IMR-90 (cell line): ENCODE measurements at regions of chrX and their contacts with region 1.

Region 1: DNA sequence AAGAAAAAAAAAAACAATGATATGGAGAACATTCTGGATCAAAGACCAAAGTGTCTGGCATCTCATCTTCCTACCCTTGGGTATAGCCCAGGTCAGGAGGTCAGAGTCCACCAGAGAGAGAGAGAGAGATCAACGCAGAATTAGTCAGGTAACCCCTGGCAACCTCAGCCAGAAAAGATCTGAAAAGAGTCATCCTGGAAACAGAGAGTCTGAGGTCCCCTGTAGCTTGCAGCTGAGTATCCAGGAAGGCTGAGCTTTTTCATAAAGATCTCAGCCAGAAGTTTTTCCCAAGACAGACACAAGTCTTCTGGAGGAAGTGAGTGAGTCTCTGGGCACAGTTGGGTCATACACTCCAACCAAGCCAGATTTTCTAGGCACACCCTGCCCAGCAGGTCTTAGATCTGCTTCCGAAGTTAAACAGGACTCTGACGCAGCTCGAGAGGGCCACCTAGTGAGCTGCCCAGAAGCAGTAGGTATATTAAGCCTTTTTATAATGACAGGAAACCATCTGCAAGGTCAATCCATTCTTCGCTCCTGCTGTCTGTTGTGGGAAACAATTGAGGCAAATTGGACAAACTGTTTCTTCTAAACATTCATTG is 35.7 kb downstream of the ACE2 start:
- DNase-seq: peak; percentile 44
- ATAC-seq: peak; percentile 83
- H3K4me3 ChIP-seq: no peak overlapping the region
- H3K27ac ChIP-seq: no peak overlapping the region
- H3K4me1 ChIP-seq: no peaks in the 10 kb centered on the region
- H3K27me3 ChIP-seq: peaks cover 19% of the 10 kb centered on the region
- CTCF ChIP-seq: peak; percentile 62
- POLR2A ChIP-seq: no peak
- RAD21 ChIP-seq: peak; percentile 66

Region 2: DNA sequence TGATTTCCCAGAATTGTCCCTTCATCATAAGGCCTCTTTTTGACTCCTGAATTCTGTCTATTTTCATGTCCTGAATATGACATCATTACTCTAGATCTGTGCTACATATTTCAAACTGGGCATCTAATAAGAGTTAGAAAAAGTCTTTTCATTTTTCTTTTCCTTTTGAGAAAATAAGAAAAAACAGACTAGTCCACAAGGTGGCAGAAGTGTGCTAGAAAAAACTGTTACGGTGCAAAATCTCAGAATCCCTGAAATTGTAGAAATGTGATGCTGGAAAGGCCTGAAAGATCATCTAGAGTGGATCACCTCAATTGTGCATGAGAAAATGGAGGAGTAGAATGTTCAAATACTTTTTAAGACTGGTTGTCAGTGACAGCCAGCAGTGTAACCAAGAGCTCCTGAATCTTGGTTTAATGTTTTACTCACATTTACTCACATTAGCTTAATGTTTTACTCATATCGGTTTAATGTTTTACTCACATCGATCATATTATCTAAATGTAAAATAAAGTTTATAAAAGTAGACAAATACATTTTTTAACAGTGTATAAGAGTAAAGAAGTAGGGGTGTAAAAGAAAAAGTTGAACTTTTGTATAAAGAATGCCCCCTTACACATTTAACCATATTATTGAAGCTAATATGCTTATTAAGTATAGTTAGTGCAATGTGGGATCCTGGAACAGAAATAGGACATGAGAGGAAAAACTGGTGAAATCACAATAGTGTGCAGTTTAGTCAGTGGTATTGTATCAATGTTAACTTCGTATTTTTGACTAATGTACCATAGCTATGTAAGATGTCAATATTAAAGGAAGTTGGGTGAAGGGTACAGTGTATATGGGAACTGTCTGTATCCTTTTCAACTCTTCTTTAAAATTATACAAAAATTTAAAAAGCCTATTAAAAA is 264.9 kb before region 1 on chrX:
- CTCF ChIA-PET with region 1: no interaction called
- POLR2A ChIA-PET with region 1: no interaction called
- dilution Hi-C with region 1: no loop called
- in situ Hi-C with region 1: no loop called
- intact Hi-C with region 1: loop called (anchors 1 kb)
- DNase-seq: peak; percentile 30
- ATAC-seq: peak; percentile 29; the same call in 1 of the 2 replicates
- H3K4me3 ChIP-seq: no peak overlapping the region
- H3K27ac ChIP-seq: no peak overlapping the region
- H3K4me1 ChIP-seq: no peaks in the 10 kb centered on the region
- H3K27me3 ChIP-seq: peaks cover 1% of the 10 kb centered on the region
- CTCF ChIP-seq: peak; percentile 54
- POLR2A ChIP-seq: no peak
- RAD21 ChIP-seq: peak; percentile 44

Region 3: DNA sequence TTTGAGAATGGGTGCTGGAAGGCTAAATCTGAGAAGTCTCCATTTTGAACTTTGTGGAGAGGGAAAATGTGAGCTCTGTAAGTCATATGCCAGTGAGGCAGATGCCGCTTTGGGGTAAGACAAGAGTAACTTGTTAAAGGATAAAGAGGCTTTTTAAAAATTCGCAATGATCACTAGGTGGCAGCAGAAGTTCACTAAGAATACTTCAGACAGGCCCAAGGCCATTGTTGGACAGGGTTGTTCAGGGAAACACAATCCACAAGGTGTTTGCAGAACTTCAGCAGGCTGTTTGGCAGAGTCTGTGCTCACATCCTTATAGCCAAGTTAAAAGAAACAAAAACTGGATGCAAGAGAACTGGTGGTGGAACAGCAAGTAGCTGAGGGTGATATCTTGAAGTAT is 216.0 kb before region 1 on chrX:
- CTCF ChIA-PET with region 1: no interaction called
- POLR2A ChIA-PET with region 1: no interaction called
- dilution Hi-C with region 1: no loop called
- in situ Hi-C with region 1: loop called (anchors 10 kb)
- intact Hi-C with region 1: loop called (anchors 1 kb)
- DNase-seq: peak; percentile 73
- ATAC-seq: peak; percentile 90
- H3K4me3 ChIP-seq: no peak overlapping the region
- H3K27ac ChIP-seq: no peak overlapping the region
- H3K4me1 ChIP-seq: no peaks in the 10 kb centered on the region
- H3K27me3 ChIP-seq: peaks cover 4% of the 10 kb centered on the region; the same call in 1 of the 2 replicates
- CTCF ChIP-seq: peak; percentile 66
- POLR2A ChIP-seq: no peak
- RAD21 ChIP-seq: peak; percentile 77

Region 4: DNA sequence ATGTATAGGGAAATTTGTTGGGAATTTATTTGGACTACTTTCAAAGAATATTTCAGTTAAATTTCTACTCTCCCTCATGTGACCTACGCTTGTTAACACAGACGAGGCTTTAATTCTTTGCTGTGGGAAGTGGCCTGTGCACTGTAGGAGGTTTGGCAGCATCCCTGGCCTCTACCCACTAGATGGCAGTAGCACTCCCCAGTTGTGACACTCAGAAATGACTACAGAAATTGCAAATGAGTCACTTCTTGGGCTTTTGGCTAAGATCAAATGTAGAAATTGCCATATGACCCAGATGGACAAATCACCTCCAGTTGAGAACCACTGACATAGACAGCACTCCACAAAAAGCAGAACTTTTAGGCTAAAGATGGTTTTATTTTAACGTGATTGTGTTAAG is 94.1 kb before region 1 on chrX:
- CTCF ChIA-PET with region 1: no interaction called
- POLR2A ChIA-PET with region 1: no interaction called
- dilution Hi-C with region 1: no loop called
- in situ Hi-C with region 1: no loop called
- intact Hi-C with region 1: loop called (anchors 1 kb)
- DNase-seq: peak; percentile 65
- ATAC-seq: peak; percentile 83
- H3K4me3 ChIP-seq: no peak overlapping the region
- H3K27ac ChIP-seq: no peak overlapping the region
- H3K4me1 ChIP-seq: peaks cover 2% of the 10 kb centered on the region
- H3K27me3 ChIP-seq: peaks cover 2% of the 10 kb centered on the region
- CTCF ChIP-seq: peak; percentile 81
- POLR2A ChIP-seq: no peak
- RAD21 ChIP-seq: peak; percentile 73

Region 5: DNA sequence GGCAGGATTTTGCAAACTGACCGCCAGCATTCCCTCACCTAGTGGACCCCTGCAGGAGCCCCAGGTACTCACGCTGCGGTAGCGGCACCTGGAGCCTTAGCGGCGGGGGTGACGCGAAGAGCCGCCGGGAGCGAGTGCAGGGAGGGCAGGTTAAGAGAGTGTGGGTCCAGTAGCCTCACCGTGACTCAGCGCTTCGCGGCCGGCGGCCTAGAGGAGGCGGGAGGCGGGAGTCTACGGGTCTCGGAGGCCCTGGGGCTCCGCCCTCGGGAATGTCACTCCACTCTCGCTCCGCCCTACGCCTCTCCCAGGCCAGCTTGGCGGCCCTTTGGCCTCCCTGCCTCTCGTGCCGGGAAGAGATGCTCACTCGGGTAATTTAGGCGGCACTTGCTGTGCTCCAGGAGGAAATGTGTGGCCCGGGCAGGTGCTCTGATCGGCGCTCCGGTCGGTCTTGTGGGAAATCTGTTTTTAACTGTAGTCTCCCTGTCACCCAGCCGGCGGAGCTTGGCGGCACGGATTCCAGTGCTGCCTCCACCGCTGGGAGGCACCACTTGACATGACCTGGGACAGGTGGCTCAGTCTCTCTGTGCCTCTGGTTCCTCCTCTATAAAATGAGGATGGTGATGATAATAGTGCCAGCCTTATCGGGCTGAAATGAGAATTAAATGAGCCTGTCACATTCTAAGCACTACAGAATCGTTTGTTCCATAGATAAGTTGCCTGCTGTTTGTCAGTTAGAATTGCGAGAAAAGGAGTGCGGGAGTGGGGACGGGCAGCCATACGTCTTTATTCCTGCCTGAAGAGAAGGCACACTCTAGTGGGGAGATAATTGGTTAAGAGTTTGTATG is 71.7 kb before region 1 on chrX and contains the start of gene PIR:
- CTCF ChIA-PET with region 1: no interaction called
- POLR2A ChIA-PET with region 1: no interaction called
- dilution Hi-C with region 1: no loop called
- in situ Hi-C with region 1: no loop called
- intact Hi-C with region 1: loop called (anchors 1 kb)
- DNase-seq: peak; percentile 80
- ATAC-seq: peak; percentile 99
- H3K4me3 ChIP-seq: peak within 1 kb of the TSS; percentile 60
- H3K27ac ChIP-seq: peak within 1 kb of the TSS; percentile 63; the same call in 1 of the 2 replicates
- H3K4me1 ChIP-seq: no peaks in the 10 kb centered on the region
- H3K27me3 ChIP-seq: no peaks in the 10 kb centered on the region
- CTCF ChIP-seq: 0 out of 2 replicates have a peak, but pooled peaks have one; percentile 27
- POLR2A ChIP-seq: no peak; the same call in 1 of the 2 replicates
- RAD21 ChIP-seq: no peak
- total RNA-seq, gene PIR: 5.7 and 5.8 TPM in 2 replicates